SK-N-SH (cell line): ENCODE measurements at regions of chr2 and their contacts with region 1.

Region 1: DNA sequence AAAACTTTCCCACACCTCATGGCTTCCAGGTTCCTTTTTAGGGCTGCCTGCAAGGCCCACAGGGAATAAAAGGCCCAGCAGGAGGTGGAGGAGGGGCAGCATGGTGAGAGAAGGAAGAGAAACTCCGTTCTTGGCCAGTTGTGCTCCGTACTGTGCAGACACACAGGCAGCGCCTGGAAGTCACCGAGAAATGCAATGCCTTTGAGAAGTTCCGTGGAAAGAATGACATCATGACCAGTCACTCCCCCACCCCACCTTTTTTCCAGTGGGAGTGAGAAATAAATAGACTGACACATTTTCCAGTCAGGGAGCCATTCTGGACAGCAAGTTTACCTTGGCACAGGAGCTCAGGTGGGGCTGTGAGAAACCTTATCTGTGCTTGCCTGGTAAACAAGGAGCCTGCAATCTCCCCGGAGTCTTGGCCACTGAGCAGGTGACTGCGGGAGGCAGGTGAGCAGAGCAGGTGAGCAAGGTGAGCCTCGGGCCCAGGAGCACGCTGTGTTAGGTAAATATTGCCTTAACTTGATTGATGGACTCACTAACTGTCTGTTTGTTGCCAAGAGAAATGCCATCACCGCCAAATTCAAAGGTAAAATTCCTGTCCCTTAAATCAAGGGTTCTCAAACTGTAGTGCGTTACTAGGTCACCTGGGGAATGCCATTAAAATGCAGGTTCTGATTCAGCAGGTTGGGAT is 13.5 kb upstream of the LBH start:
- DNase-seq: no peak
- H3K4me3 ChIP-seq: no peak overlapping the region
- H3K27ac ChIP-seq: no peak overlapping the region
- H3K4me1 ChIP-seq: peaks cover 0 to 3% of the 10 kb centered on the region in 2 experiments; a peak in 2 of 4 replicates
- H3K27me3 ChIP-seq: no peaks in the 10 kb centered on the region
- CTCF ChIP-seq: no peak
- EP300 ChIP-seq: no peak
- RAD21 ChIP-seq: no peak

Region 2: DNA sequence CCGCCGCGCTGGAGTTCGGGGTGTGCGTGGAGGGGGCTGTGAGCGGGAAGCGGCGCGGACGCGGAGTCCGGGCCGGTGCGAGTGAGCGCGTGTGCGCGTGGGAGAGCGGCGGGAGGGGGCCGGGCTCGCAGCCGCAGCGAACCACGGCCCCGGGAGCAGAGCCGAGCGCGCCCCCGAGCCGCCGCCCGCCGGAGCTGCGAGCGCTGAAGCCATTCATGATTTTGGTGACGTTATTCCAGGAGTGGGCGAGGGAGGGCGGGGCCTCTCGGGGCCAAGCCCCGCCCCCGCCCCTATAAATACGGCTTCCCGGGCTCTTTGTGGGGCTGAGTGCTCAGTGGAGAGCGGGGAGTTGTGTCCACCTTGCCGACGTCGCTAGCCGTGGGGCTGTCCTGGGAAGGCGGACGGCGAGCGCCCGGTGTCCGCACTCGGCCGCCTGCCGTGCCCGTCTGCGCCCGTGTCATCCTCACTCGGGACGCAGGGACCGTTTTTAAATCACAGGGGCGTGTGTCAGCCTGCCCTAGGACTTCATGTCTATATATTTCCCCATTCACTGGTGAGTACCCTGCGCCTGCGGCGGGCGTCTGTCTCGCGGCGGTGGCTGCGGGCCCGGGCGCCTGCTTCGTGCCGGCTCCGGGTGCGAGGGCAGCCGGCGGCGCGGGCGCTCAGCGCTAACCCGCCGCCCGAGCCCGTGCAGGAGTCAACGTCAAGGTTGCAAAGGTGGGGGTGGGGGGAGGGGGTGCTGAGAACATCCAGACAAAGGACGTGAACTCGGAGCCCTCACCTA is 13.6 kb after region 1 on chr2 and contains the start of gene LBH:
- CTCF ChIA-PET with region 1: interaction called, 40 read pairs
- POLR2A ChIA-PET with region 1: interaction called, 3 read pairs
- DNase-seq: peak; percentile 98
- H3K4me3 ChIP-seq: peak within 1 kb of the TSS; percentile 73 to 92
- H3K27ac ChIP-seq: peak within 1 kb of the TSS; percentile 43 to 62; a peak in 3 of 4 replicates
- H3K4me1 ChIP-seq: peaks cover under 1 to 22% of the 10 kb centered on the region in 2 experiments; a peak in 2 of 4 replicates
- H3K27me3 ChIP-seq: no peaks in the 10 kb centered on the region
- CTCF ChIP-seq: no peak
- EP300 ChIP-seq: peak in 1 of 2 experiments; percentile 11; a peak in 1 of 4 replicates
- RAD21 ChIP-seq: no peak
- polyA plus RNA-seq, gene LBH: 22.8 and 26.4 TPM in 2 replicates